ENCODE measurements at regions of chr20 and their contacts with region 1.

Region 1: GRCh38 chr20:39049684-39050554 is 87.8 kb downstream of the DHX35 start:
- DNase-seq: peak; percentile 93

Region 2: DNA sequence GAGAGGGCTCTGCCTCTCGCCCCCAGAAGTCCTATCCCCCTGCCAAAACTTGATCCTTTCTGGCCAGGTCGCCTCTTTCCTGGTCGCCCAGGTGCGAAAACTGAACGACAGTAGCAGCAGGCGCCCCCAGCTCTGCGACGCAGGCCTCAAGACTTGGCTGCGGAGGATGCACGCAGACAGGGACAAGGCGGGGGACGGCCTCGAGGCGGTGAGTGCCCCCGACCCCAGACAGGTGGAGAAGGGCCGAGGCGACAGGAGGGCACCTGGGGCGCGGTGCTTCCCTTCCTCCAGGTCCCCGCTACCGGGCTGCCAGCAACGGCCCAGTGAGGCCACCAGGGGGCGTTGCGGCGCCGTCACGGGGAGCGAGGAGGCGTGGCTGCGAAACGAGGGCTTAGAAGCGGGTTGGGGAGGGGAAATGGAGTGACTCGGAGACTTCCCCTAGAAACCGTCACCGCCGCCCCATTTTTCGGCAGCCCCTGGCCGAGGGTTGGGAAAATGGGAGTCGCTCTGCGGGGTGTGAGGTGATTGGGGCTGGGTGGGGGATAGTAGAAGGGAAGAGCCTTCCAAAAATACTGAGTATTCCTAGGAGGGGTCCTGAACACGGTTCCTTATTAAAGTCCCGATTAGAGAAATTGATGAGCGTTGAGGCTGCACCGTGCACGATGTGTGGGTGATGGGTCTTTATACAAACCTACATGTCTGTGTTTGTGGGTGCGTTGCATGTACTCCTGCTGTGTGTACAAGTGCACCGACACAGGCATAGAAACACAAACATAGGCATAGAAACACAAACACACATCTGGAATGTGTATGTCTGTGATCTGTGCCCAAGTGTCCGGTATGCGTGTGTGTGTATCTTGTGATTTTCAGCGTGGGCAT is 403.7 kb before region 1 on chr20:
- intact Hi-C with region 1: loop called in 1 of 2 experiments (anchors 10 kb)
- DNase-seq: peak; percentile 93

Region 3: DNA sequence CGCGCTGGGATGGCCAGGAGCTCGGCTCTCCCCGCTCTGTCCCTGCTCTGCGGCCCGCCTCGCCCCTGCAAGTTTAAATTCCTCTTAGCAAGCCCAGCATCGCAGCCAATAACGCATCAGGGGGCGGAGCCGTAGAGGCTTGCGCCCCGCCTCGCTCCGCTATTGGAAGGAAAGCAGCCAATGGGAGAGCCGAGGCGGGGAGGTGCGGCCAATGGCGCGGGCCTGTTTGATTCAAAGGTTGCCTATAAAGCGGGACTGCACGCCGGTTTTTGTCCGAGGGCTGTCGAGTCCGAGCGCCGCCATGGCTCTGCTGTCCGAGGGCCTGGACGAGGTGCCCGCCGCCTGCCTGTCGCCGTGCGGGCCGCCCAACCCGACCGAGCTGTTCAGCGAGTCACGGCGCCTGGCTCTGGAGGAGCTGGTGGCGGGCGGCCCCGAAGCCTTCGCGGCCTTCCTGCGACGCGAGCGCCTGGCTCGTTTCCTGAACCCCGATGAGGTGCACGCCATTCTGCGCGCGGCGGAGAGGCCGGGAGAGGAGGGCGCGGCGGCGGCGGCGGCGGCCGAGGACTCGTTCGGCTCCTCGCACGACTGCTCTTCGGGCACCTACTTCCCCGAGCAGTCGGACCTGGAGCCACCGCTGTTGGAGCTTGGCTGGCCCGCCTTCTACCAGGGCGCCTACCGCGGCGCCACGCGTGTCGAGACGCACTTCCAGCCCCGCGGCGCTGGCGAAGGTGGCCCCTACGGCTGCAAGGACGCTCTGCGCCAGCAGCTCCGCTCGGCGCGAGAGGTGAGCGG is 123.6 kb before region 1 on chr20 and contains the start of gene FAM83D:
- intact Hi-C with region 1: loop called (anchors 1 to 5 kb)
- DNase-seq: peak; percentile 99
- total RNA-seq, gene FAM83D: 72.1 to 94.3 TPM

Region 4: GRCh38 chr20:39081255-39081654 is 31.3 kb after region 1 on chr20:
- intact Hi-C with region 1: no loop called
- DNase-seq: peak; percentile 88